ENCODE measurements at regions of chr10 and their contacts with region 1.

Region 1: DNA sequence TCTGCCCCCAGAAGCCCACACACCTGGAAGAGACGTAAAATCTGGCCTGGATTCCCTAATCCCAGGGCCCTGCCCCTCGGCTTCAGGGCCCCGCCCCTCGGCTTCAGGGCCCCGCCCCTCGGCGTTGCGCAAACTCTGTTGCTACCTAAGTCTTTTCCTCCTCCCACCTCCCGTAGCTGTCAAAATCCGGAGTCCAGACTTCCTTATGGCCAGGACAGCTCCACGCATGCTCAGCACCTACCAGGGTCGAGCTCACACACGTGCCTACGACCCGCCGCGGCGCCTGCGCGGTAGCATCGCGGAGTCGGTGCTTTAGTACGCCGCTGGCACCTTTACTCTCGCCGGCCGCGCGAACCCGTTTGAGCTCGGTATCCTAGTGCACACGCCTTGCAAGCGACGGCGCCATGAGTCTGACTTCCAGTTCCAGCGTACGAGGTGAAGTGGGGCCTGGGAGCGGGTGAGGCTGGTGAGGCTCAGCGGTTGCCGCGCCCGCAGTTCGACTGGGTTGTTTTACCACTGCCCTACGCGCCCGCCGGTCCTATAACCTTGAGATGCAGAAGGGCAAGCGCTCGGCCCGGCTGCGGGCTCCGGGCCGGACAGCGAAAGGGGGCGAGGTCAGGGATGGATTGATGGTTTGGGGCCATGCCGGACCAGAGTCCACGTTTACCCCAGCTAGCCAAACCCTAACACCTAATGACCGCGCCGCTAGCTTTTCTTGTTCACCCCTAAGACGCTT is at the start of gene CISD1:
- DNase-seq: peak; percentile 99
- H3K4me3 Mint-ChIP-seq: peak within 1 kb of the TSS; percentile 98
- H3K27ac Mint-ChIP-seq: peak within 1 kb of the TSS; percentile 96
- H3K4me1 Mint-ChIP-seq: peaks cover 8% of the 10 kb centered on the region
- H3K27me3 Mint-ChIP-seq: no peaks in the 10 kb centered on the region
- CTCF ChIP-seq: no peak
- total RNA-seq, gene CISD1: 51.8 and 58.0 TPM in 2 replicates

Region 2: GRCh38 chr10:58152673-58153263 is 116.3 kb before region 1 on chr10:
- CTCF ChIA-PET with region 1: no interaction called
- POLR2A ChIA-PET with region 1: no interaction called
- intact Hi-C with region 1: no loop called
- DNase-seq: peak; percentile 80
- H3K4me3 Mint-ChIP-seq: no peak overlapping the region
- H3K27ac Mint-ChIP-seq: no peak overlapping the region
- H3K4me1 Mint-ChIP-seq: peaks cover 16% of the 10 kb centered on the region
- H3K27me3 Mint-ChIP-seq: no peaks in the 10 kb centered on the region
- CTCF ChIP-seq: peak; percentile 52

Region 3: DNA sequence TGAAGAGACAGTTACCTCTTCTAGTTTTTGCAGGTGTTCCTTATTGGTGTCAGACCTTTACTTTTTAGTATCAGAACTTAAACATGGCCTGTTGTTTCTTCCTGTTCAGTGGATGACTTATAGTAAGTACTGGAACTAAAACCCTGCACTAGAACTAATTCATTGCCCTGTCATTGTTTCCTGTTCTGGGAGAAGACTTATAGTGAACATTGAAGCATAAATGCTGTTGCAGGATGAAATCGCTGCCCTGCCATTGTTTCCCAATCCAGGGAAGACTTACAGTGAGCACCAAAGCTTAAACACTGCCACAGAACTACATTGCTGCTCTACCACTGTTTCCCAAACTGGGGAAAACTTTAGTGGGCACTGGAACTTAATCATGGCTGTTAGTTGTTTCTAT is 14.4 kb before region 1 on chr10:
- CTCF ChIA-PET with region 1: interaction called, 4 read pairs
- POLR2A ChIA-PET with region 1: interaction called, 14 read pairs
- intact Hi-C with region 1: no loop called
- DNase-seq: no peak
- H3K4me3 Mint-ChIP-seq: no peak overlapping the region
- H3K27ac Mint-ChIP-seq: no peak overlapping the region
- H3K4me1 Mint-ChIP-seq: no peaks in the 10 kb centered on the region
- H3K27me3 Mint-ChIP-seq: no peaks in the 10 kb centered on the region
- CTCF ChIP-seq: no peak

Region 4: DNA sequence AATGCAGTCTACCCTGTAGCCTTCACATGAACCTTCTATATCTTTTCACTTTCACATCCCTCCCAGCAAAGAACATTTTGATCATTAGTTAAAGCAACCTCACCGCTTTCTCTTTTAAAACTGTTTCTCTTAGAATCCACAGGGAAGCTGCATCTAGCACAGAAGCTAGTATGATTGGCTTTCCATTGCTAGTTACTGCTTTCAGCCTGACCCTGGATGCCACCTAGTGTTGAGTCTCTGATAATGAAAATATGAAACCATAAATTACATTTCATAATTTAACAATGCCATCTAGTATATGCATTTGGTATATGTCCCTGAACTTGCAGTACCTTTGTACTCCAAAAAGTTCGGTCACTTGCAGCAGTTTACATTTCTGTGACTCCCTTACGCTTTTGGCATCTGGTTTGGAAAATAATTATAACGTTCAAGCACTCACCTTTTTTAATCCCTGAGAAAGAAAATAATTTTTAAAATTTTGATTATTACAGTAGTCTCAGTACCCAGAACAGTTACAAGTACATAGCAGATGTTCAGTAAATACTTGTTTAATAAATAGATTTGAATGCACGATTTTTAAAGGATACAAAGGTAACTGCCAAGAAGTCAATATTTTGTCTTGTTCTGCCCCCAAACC is 22.6 kb after region 1 on chr10:
- CTCF ChIA-PET with region 1: interaction called, 33 read pairs
- POLR2A ChIA-PET with region 1: interaction called, 42 read pairs
- intact Hi-C with region 1: no loop called
- DNase-seq: peak; percentile 61
- H3K4me3 Mint-ChIP-seq: no peak overlapping the region
- H3K27ac Mint-ChIP-seq: peak overlapping the region; percentile 2
- H3K4me1 Mint-ChIP-seq: peaks cover 6% of the 10 kb centered on the region
- H3K27me3 Mint-ChIP-seq: no peaks in the 10 kb centered on the region
- CTCF ChIP-seq: peak; percentile 57

Region 5: DNA sequence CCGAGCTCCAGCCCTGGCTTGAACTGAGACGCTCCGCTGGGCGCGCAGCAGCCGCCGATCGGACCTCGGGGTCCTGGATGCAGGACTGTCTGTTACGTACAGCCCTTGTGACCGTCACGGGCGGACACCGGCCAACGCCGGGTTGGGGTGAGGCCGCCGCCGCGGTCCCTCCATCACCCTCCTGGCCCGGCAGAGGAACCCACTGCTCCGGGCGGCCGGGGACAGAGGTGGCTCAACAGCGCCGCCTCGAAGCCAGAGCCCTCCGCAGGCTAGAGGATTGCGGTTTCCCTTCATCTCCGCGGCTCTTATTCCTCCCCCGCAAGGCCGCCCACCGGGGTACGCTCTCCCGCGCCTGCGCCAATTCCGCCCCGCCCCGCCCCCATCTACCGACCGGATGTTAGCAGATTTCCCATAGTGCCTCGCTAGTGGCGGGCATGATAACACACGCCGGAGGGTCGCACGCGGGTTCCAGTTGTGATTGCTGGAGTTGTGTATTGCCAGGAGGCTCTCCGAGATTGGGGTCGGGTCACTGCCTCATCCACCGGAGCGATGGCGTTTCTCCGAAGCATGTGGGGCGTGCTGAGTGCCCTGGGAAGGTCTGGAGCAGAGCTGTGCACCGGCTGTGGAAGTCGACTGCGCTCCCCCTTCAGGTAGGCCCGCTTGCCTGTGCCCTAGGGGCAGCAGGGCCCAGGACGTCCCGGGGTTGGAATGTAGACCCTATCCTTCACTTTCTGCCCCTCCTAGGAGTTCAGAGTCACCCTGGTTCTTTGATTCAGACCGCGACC is 116.2 kb after region 1 on chr10 and contains the start of gene TFAM:
- CTCF ChIA-PET with region 1: no interaction called
- POLR2A ChIA-PET with region 1: interaction called, 34 read pairs
- intact Hi-C with region 1: no loop called
- DNase-seq: peak; percentile 93
- H3K4me3 Mint-ChIP-seq: peak within 1 kb of the TSS; percentile 86
- H3K27ac Mint-ChIP-seq: peak within 1 kb of the TSS; percentile 86
- H3K4me1 Mint-ChIP-seq: peaks cover 9% of the 10 kb centered on the region
- H3K27me3 Mint-ChIP-seq: no peaks in the 10 kb centered on the region
- CTCF ChIP-seq: peak; percentile 37
- total RNA-seq, gene TFAM: 44.4 and 62.3 TPM in 2 replicates